ENCODE measurements at regions of chr11 and their contacts with region 1.

Region 1: DNA sequence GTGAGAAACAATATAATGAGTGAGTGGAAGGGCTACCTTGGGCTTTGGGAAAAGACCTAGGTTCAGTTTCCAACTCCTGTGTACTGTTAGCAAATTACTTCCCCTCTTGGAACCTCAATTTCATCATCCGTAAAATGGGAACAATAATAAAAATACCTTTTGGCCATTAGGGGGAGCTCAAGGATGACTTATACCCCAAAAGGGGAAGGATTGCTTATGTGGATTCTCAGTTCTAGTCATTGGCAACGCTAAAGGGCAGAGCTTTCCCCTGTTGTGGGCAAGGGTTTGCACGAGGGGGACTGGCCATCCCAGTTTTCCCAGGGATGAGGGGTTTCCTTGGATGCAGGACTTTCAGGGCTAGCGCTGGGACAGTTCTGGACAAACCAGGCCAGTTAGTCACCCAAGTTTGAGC is 3.1 kb upstream of the COMMD9 start:
- DNase-seq: no peak
- H3K4me3 ChIP-seq: no peak overlapping the region
- H3K27ac ChIP-seq: no peak overlapping the region
- H3K4me1 ChIP-seq: no peaks in the 10 kb centered on the region
- H3K27me3 ChIP-seq: no peaks in the 10 kb centered on the region
- CTCF ChIP-seq: peak; percentile 43

Region 2: GRCh38 chr11:36376888-36377758 is 84.8 kb after region 1 on chr11:
- intact Hi-C with region 1: loop called (anchors 5 kb)
- DNase-seq: peak; percentile 81
- H3K4me3 ChIP-seq: peak overlapping the region; percentile 89
- H3K27ac ChIP-seq: peak overlapping the region; percentile 76
- H3K4me1 ChIP-seq: peaks cover 7% of the 10 kb centered on the region
- H3K27me3 ChIP-seq: no peaks in the 10 kb centered on the region
- CTCF ChIP-seq: peak; percentile 41

Region 3: DNA sequence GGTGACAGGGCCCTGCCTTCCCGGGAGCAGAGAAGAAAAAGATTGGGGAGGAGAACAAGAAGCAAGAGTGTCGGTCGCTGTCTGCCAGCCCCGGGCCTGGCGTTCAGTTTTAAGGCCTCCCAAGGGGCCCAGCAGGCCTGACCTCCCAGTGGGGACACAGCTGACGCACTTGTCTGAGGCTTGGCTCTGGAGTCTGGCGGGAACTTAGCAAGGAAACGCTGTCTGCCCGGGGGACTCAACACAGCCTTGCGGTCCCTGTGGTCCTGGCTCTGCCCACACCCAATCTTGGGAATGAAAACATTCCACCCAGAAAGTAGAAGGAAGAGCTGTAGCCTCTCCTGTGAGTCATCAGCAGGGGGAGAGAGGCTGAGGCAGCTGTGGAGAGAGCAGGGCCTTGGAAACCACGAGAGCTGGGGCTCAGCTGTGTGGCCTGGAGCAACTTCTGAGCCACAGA is 163.4 kb after region 1 on chr11:
- intact Hi-C with region 1: loop called (anchors 10 kb)
- DNase-seq: no peak
- H3K4me3 ChIP-seq: no peak overlapping the region
- H3K27ac ChIP-seq: peak overlapping the region; percentile 19
- H3K4me1 ChIP-seq: peaks cover 7% of the 10 kb centered on the region
- H3K27me3 ChIP-seq: no peaks in the 10 kb centered on the region
- CTCF ChIP-seq: no peak

Region 4: DNA sequence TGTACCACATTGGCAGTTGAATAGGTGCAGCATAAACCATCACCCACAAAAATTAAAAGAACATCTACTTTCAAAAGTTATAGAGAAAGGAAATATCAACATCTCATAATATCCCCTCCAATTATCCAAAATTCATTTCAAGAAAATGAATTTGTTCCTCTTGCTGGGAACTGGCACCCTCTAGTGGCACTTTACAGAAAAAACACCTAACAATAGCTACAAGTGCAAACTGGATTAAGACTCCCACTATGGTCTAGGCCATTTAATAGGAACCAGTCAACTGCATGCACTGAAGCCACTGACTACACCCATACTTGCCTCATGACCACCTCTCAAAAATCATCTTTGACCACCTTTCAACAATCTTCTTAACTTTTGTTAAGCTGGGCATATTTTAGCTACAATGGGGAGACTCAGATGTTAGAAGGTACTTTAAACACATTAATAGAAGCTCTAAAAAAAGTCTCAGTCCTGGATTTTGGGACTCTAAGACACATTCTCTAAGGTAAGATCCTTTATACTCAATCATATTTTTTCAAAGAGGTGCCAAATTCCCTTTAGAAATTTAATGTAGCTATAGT is 200.5 kb after region 1 on chr11:
- intact Hi-C with region 1: loop called (anchors 2 kb)
- DNase-seq: peak; percentile 29
- H3K4me3 ChIP-seq: no peak overlapping the region
- H3K27ac ChIP-seq: no peak overlapping the region
- H3K4me1 ChIP-seq: no peaks in the 10 kb centered on the region
- H3K27me3 ChIP-seq: no peaks in the 10 kb centered on the region
- CTCF ChIP-seq: peak; percentile 68

Measured in colonic mucosa (tissue), 4 donors.